Mammary epithelial cell (primary cell): ENCODE measurements at regions of chr1 and their contacts with region 1.

Region 1: DNA sequence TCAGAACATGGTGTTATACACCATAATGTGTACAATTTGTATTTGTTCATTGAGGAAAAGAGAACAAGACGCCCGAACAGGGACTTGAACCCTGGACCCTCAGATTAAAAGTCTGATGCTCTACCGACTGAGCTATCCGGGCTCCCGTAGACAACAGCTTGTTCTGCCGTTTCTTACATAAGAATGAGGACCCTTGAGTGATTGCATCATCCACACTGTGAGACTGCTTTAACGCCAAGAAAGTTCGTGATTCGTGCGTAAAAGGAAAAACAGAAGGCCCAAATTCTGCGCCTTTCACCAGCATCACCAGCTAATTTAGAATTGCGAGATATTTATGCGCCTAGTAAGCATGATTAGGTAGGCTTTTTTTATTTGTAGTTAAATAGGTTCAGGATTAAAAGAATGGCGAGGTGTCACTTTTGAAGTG is 9.2 kb upstream of the MDM4 start:
- DNase-seq: peak; percentile 86
- H3K4me3 ChIP-seq: peak overlapping the region; percentile 50 to 58 (median 56)
- H3K27ac ChIP-seq: peak overlapping the region; percentile 63
- H3K4me1 ChIP-seq: peaks cover 6% of the 10 kb centered on the region
- H3K27me3 ChIP-seq: no peaks in the 10 kb centered on the region
- CTCF ChIP-seq: no peak

Region 2: GRCh38 chr1:203807196-203807595 is 699.8 kb before region 1 on chr1:
- CTCF ChIA-PET with region 1: no interaction called
- dilution Hi-C with region 1: no loop called
- in situ Hi-C with region 1: no loop called
- intact Hi-C with region 1: no loop called
- DNase-seq: no peak
- H3K4me3 ChIP-seq: no peak overlapping the region
- H3K27ac ChIP-seq: no peak overlapping the region
- H3K4me1 ChIP-seq: no peaks in the 10 kb centered on the region
- H3K27me3 ChIP-seq: no peaks in the 10 kb centered on the region
- CTCF ChIP-seq: no peak

Region 3: GRCh38 chr1:203861379-203862184 is 645.4 kb before region 1 on chr1 and contains the start of gene SNRPE:
- CTCF ChIA-PET with region 1: no interaction called
- dilution Hi-C with region 1: no loop called
- in situ Hi-C with region 1: no loop called
- intact Hi-C with region 1: loop called (anchors 5 kb)
- DNase-seq: peak; percentile 97
- H3K4me3 ChIP-seq: peak within 1 kb of the TSS; percentile 59 to 92 (median 74)
- H3K27ac ChIP-seq: peak within 1 kb of the TSS; percentile 82
- H3K4me1 ChIP-seq: peaks cover 22% of the 10 kb centered on the region
- H3K27me3 ChIP-seq: no peaks in the 10 kb centered on the region
- CTCF ChIP-seq: peak; percentile 80 to 94
- total RNA-seq, gene SNRPE: 21.7 to 131 TPM

Region 4: DNA sequence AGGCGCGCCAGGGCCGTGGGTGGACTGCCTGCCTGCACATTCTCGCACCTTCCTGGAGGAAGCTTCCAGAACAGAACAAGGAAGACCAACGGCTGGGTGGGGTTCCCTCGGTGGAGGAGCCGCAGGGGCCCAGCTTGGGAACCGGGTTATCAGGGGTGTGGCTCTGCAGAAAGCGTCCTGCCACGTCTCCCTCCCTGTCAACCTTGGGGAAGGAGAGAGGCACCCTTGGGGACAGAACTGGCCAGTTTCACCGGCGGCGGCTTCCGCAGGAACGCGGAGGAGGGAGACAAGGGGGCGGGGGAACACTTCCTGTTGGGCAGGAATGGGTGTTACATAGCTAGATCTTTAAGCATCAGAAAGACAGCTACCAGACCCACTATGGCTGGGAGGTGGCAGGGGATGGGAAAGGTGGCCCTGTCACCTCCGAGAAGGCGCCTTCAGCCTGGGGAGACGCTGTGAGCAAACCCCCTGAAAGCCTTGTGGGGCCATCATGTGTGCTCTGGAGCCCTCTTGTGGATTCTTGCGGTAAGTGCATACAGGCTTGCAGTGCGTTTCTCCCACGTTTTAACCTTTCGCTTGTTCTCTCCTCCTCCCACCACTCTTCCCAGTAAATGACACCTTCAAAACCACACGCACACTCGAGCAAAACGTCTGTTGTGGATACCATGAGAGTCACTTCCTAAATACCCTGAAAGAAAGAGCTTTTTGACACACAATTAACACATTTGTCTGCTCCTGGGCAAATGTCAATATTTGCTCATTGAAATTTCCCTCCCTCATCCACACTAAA is 143.4 kb before region 1 on chr1:
- CTCF ChIA-PET with region 1: no interaction called
- dilution Hi-C with region 1: no loop called
- in situ Hi-C with region 1: no loop called
- intact Hi-C with region 1: loop called (anchors 1 kb)
- DNase-seq: peak; percentile 59
- H3K4me3 ChIP-seq: peak overlapping the region; percentile 36 to 53 (median 41)
- H3K27ac ChIP-seq: peak overlapping the region; percentile 6
- H3K4me1 ChIP-seq: peaks cover 7% of the 10 kb centered on the region
- H3K27me3 ChIP-seq: no peaks in the 10 kb centered on the region
- CTCF ChIP-seq: peak; percentile 96 to 98

Region 5: DNA sequence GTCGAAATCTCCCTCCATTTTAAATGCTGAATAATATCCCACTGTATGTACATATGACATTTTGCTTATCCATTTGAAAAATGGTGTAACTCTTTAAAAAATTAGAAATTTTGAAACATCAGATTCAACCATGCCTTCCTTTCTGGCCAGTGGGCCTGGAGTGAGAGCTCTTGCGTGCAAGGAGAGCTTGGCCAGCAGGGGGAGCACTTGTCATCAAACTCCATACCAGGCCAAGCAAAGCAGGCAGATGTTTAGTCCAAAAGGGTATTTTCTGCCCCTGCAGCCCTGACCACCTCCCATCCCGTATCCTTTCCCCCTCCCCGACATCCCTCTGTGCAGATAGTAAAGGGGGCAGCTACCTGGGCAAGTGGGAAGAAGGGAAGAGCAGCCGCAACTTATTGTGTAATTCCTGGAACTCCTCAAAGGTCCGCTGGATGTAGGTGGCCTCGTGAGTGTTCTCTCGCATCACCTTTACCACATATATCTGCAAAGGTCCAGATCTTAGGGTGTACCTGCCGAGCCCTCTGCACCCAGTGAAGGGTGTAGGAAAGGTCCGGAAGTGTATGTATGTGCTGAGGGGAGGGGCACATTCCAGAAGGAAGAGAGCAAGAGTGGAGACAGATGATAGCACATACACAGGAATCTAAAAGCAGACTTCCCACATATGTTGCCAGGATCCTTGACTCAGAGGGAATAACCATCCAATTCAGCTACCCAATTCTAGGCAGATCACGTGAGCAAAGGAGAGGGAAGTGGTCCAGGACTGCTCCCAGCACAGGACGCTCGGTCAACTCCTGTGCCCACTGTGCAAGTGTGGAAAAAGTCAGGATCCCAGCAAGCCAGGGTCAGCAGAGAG is 75.4 kb before region 1 on chr1:
- CTCF ChIA-PET with region 1: interaction called, 7 read pairs
- dilution Hi-C with region 1: no loop called
- in situ Hi-C with region 1: loop called (anchors 5 kb)
- intact Hi-C with region 1: loop called (anchors 1 kb)
- DNase-seq: peak; percentile 56
- H3K4me3 ChIP-seq: no peak overlapping the region
- H3K27ac ChIP-seq: no peak overlapping the region
- H3K4me1 ChIP-seq: peaks cover 23% of the 10 kb centered on the region
- H3K27me3 ChIP-seq: no peaks in the 10 kb centered on the region
- CTCF ChIP-seq: peak; percentile 91 to 96

Region 6: DNA sequence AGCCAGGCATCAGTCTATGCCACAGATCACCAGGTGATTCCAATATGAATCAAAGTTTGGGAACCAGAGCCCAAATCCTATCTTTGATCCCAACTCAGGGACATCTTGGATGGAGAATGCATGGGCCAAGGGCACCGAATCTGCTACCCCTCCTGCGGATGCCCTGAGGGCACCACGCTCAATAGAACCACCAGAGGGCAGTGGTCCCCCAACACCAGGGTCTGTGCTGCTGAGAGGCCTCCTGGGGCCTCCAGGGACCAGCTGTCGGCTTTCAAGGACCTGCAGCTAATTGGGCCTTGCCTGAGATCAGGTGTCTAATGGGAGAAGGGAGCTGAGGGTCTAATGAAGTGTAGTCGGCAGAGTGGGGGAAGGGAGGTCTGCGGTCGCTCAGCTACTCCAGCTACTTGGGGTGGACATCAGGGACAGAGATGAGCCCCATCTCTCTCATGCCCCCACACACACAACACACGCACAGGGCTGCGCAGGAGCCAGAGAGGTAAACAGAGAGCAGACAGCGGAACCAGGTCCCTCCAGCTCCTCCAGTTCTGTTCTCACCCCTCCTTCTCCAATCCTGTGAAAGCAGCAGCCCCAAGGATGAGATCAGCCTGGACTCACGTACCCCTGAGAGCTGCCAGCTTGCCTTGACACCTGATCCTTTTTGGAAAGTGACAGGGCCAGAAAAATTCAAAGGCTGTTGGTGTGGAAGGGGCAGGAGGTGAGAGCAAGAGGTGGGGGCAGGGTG is 60.4 kb before region 1 on chr1:
- CTCF ChIA-PET with region 1: no interaction called
- dilution Hi-C with region 1: loop called (anchors 5 kb)
- in situ Hi-C with region 1: no loop called
- intact Hi-C with region 1: loop called (anchors 1 kb)
- DNase-seq: no peak
- H3K4me3 ChIP-seq: no peak overlapping the region
- H3K27ac ChIP-seq: no peak overlapping the region
- H3K4me1 ChIP-seq: peaks cover 32% of the 10 kb centered on the region
- H3K27me3 ChIP-seq: no peaks in the 10 kb centered on the region
- CTCF ChIP-seq: peak; percentile 39 to 57

Region 7: DNA sequence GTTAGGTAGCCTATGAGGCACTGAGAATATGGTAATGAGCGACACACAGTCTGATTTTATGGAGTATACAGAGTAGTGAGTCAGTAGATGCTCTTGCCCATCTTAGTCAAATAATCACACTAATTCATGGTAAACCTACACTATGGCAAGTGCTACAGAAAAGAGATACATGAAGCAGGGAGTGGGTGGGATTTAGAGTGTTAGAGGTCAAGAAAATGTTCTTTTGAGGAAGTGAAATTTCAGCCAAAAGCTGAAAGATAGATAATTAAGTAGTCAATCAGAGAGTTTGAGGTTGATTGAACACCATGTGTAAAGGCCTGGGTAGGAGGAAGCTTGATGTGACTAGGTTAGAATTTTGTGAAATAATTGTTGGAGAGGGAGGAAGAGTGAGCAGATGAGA is 24.0 kb after region 1 on chr1:
- CTCF ChIA-PET with region 1: no interaction called
- dilution Hi-C with region 1: no loop called
- in situ Hi-C with region 1: no loop called
- intact Hi-C with region 1: no loop called
- DNase-seq: no peak
- H3K4me3 ChIP-seq: no peak overlapping the region
- H3K27ac ChIP-seq: no peak overlapping the region
- H3K4me1 ChIP-seq: no peaks in the 10 kb centered on the region
- H3K27me3 ChIP-seq: no peaks in the 10 kb centered on the region
- CTCF ChIP-seq: no peak

Region 8: DNA sequence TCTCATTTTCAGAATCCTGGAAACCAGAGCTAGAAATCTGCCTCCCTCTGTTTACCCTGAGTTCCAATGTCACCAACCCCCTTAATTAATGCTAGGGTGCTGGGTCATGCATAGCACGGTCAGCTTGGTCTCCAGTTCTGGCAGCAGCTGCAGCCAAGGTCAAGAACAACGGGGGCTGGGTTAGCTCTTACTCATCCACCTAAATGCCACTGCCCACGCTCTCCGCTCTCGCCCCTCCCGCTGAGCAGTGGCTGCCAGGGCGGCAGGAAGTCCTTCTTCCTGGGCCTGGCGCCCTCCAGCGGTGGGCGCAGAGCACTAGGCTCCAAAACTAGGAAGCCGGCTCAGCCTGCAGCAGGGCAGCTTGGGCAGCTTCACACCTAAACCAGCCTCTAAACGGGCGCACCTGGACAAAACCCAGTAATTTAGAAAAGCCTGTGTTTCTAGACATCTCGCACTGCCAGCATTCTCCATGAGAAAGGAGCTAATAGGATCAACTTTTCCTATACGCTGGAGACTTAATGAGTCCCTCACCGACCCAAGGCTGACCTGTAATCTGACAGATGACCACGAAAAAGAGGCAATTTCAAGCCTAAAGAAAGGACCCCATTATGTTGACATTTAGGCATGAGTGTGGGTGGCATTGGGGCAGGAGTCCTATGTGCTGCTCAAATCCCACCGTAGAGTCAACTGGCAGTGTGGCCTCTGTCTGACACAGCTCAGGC is 256.9 kb after region 1 on chr1:
- CTCF ChIA-PET with region 1: no interaction called
- dilution Hi-C with region 1: no loop called
- in situ Hi-C with region 1: no loop called
- intact Hi-C with region 1: loop called (anchors 2 kb)
- DNase-seq: peak; percentile 67
- H3K4me3 ChIP-seq: no peak overlapping the region
- H3K27ac ChIP-seq: no peak overlapping the region
- H3K4me1 ChIP-seq: no peaks in the 10 kb centered on the region
- H3K27me3 ChIP-seq: no peaks in the 10 kb centered on the region
- CTCF ChIP-seq: peak; percentile 69 to 93

Region 9: GRCh38 chr1:204941421-204942338 is 434.7 kb after region 1 on chr1:
- CTCF ChIA-PET with region 1: no interaction called
- dilution Hi-C with region 1: no loop called
- in situ Hi-C with region 1: no loop called
- intact Hi-C with region 1: loop called (anchors 5 kb)
- DNase-seq: peak; percentile 37
- H3K4me3 ChIP-seq: no peak overlapping the region
- H3K27ac ChIP-seq: no peak overlapping the region
- H3K4me1 ChIP-seq: peaks cover 14% of the 10 kb centered on the region
- H3K27me3 ChIP-seq: no peaks in the 10 kb centered on the region
- CTCF ChIP-seq: peak; percentile 98